ENCODE measurements at regions of chr4 and their contacts with region 1.

Region 1: GRCh38 chr4:98334461-98334860 is 73.3 kb downstream of the RAP1GDS1 start:
- DNase-seq: no peak
- ATAC-seq: no peak
- H3K4me3 ChIP-seq: no peak overlapping the region
- H3K4me3 Mint-ChIP-seq: no peak overlapping the region
- H3K27ac ChIP-seq: no peak overlapping the region
- H3K27ac Mint-ChIP-seq: no peak overlapping the region
- H3K4me1 ChIP-seq: no peaks in the 10 kb centered on the region
- H3K4me1 Mint-ChIP-seq: peaks cover 6 to 16% (median 14%) of the 10 kb centered on the region in 3 donors
- H3K27me3 ChIP-seq: no peaks in the 10 kb centered on the region
- H3K27me3 Mint-ChIP-seq: no peaks in the 10 kb centered on the region

Region 2: GRCh38 chr4:98179951-98180350 is 154.5 kb before region 1 on chr4:
- CTCF ChIA-PET with region 1: interaction called in 1 of 2 experiments, 10 read pairs
- POLR2A ChIA-PET with region 1: no interaction called
- DNase-seq: no peak
- ATAC-seq: no peak
- H3K4me3 ChIP-seq: no peak overlapping the region
- H3K4me3 Mint-ChIP-seq: no peak overlapping the region
- H3K27ac ChIP-seq: no peak overlapping the region
- H3K27ac Mint-ChIP-seq: no peak overlapping the region
- H3K4me1 ChIP-seq: no peaks in the 10 kb centered on the region
- H3K4me1 Mint-ChIP-seq: no peaks in the 10 kb centered on the region
- H3K27me3 ChIP-seq: no peaks in the 10 kb centered on the region
- H3K27me3 Mint-ChIP-seq: no peaks in the 10 kb centered on the region